Posterior cingulate gyrus (tissue), 11 donors: ENCODE measurements at regions of chr1 and their contacts with region 1.

Region 1: GRCh38 chr1:235079443-235080296 is 49.0 kb downstream of the TOMM20 start:
- DNase-seq: peak in 2 of 10 donors; percentile 38 to 50

Region 2: DNA sequence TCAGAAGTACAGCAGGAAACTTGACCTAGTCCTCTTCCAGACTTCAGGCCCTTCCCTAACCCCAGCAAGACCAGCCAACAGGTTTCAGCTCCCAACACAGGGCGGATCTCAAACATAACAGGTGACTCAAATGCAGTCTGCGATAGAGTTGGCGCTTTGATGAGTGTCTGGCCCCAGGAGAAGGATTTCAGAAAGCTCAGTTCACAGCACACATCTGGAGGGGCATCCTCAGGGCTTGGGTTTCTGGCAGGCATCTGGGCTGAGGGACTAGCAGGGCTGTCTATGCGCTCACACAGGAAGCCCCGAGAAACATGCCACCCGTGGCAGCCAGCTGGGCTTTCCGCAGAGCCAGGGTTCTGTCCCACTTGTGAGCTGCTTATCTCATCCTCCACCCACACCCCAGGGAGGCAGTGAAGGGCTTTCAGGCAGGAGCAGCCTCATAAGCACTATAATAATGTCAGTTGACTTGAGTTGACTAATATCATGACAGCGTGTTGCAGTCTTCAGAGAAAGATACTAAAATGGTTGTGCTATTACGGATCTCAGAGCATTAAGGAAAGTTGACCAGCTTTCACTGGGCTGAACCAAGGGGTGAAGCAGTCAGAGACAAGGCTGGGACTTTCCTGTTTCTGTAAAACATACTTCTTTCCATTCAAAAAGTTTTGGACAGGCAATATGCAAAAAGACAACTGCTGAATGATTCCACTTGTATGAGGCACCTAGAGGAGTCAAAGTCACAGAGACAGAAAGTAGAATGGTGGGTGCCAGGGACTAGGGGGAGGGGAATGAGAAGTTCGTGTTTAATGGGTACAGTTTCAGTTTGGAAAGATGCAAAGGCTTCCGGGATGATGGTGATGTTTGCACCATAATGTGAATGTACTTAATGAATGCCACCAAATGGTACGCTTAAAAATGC is 236.7 kb before region 1 on chr1:
- intact Hi-C with region 1: loop called (anchors 10 kb)
- DNase-seq: peak in 3 of 10 donors; percentile 23 to 88 (median 84)